ENCODE measurements at regions of chr3 and their contacts with region 1.

Region 1: DNA sequence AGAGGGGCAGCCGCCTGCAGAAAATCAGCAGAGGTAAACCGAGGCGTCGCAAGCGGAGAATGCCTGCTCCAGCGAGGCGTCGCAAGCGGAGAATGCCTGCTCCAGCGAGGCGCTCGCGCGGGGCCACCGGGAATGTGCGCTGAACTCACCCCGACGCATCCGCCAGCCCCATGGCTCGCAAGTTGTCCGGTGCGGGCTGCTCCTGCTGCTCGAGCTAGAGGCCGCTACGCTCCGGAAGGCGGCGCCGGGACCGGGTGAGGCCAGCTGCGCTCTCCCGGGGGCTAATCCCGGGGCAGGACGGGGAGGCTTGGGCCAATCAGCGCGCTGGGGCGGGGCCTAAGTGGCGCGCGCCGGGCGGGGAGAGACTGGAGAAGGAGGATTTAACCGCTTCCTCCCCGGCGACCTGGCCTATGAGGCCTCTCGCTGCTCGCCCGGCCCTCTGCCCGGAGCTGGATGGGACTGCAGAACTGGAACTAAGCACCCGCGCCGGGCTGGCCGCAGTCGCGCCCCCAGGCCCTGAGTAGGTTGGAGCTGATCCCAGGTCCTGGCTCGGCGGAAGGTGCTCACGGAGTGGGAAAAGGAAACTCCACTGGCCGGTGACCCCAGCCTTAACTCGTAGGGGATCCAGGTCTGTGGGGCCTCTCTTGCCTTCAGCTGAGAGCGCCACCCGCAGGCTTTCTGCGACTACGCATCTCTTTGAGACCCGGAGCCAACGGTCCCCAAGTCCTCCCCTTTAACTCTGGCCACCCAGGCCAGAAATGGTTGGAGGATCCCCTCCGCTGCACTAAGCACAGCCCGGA is at the start of gene SLC26A6:
- DNase-seq: peak; percentile 99
- H3K4me3 ChIP-seq: peak within 1 kb of the TSS; percentile 80 to 99 (median 90)
- H3K27ac ChIP-seq: peak within 1 kb of the TSS; percentile 76 to 89 (median 86)
- H3K4me1 ChIP-seq: peaks cover 22 to 30% (median 25%) of the 10 kb centered on the region in 4 donors
- H3K27me3 ChIP-seq: no peaks in the 10 kb centered on the region
- CTCF ChIP-seq: peak; percentile 43 to 49 (median 47)
- EP300 ChIP-seq: no peak
- POLR2A ChIP-seq: no peak
- total RNA-seq, gene SLC26A6: 6.1 to 11.7 (median 8.8) TPM

Region 2: DNA sequence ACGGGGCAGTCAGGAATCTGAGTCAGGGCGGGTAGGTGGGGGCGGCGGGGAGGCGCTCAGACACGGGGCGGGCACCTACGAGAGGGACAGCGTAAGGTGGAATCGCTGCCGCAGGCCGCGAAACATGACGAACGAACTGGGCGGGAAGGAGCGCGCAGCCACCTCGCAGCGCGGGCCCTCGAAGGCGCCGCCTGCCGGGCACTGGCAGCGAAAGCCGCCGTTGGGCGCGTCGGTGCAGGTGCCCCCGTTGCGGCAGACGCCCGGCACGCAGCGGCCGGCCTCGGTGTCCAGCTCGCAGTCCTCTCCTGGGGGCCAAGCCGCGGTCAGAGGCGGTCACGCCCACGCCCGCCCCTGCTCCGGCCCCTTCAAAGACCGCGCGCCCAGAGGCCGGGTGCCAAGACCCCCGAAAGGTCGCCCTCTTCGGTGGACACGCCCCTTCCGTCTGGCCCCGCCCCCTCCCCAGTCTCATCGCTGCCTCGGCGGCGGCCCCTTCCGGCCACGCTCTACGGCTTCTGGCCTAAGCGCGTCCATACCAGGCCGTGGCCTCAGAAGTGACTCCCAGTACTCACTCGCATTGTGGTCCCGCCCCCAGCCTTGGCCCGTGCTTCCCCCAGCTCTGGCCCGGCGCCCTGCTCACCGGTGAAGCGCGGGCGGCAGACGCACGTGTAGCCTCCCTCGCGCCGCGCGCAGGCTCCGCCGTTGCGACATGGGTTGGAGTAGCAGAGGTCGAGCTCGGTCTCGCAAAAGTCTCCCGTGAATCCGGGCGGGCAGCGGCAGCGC is 20.8 kb after region 1 on chr3:
- intact Hi-C with region 1: loop called (anchors 1 kb)
- DNase-seq: peak; percentile 93
- H3K4me3 ChIP-seq: peak overlapping the region; percentile 63 to 72 (median 68)
- H3K27ac ChIP-seq: peak overlapping the region; percentile 75 to 84 (median 77)
- H3K4me1 ChIP-seq: peaks cover 7 to 25% (median 22%) of the 10 kb centered on the region in 4 donors
- H3K27me3 ChIP-seq: peaks cover 0 to 32% (median 0%) of the 10 kb centered on the region in 4 donors
- CTCF ChIP-seq: peak; percentile 70 to 77 (median 72)
- EP300 ChIP-seq: no peak
- POLR2A ChIP-seq: no peak

Region 3: GRCh38 chr3:48918388-48919214 is 283.2 kb after region 1 on chr3 and contains the start of gene ARIH2:
- intact Hi-C with region 1: no loop called
- DNase-seq: peak; percentile 97
- H3K4me3 ChIP-seq: peak within 1 kb of the TSS; percentile 76 to 89 (median 82)
- H3K27ac ChIP-seq: peak within 1 kb of the TSS; percentile 88 to 98 (median 94)
- H3K4me1 ChIP-seq: peaks cover 27 to 43% (median 38%) of the 10 kb centered on the region in 4 donors
- H3K27me3 ChIP-seq: no peaks in the 10 kb centered on the region
- CTCF ChIP-seq: peak in 1 of 3 experiments; percentile 14
- EP300 ChIP-seq: no peak
- POLR2A ChIP-seq: peak; percentile 71
- total RNA-seq, gene ARIH2: 78.9 to 109 (median 97.5) TPM

Measured in esophagus muscularis mucosa (tissue), 4 donors.